H1 (cell line): ENCODE measurements at regions of chr7 and their contacts with region 1.

Region 1: DNA sequence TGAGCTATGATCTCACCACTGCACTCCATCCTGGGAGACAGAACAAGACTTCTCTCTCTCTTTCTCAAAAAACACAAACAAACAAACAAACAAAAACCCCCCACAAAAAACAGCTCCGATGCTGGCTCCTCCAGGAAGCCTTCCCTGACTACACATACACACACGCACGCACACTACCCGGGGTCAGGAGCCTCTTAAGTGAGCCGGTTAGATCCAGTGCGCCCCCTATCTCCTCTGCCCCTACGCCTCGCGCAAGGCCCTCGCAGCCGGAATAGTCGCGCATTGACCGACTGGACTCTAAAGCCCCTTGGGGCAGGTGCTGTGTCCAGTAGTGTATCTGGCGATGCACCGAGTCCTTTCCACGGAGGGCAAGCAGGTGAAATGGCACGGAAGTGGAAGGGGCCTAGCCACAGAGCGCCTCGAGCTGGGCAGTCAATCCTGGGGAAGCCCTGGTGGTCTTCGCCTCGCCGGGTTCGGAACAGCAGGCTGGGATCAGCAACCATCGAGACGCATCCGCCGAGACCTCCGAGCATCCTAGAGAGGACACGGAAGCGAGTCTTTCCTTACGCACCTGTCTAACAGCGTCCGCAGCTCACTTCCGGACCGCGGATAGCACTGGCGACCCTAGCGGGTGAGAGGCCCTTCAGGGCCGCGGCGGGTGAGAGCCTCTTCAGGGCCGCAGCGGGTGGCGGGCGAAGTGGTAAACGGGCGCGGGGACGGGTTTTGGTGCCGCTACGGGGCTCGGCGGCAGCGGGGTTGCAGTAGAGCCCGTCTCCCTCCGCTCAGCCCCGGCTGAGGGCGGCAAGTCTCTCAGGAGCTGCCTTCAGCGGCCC is at the start of gene ZSCAN25:
- DNase-seq: peak; percentile 88 to 94
- H3K4me3 ChIP-seq: peak within 1 kb of the TSS; percentile 88 to 96 (median 94)
- H3K27ac ChIP-seq: peak within 1 kb of the TSS; percentile 96
- H3K4me1 ChIP-seq: no peaks in the 10 kb centered on the region; a peak in 2 of 7 replicates
- H3K27me3 ChIP-seq: no peaks in the 10 kb centered on the region
- CTCF ChIP-seq: peak; percentile 45 to 70 (median 62)
- EP300 ChIP-seq: peak in 1 of 2 experiments; percentile 15; a peak in 1 of 3 replicates
- POLR2A ChIP-seq: peak; percentile 75 to 96
- RAD21 ChIP-seq: peak; percentile 37 to 65
- total RNA-seq, gene ZSCAN25: 16.5 and 18.6 TPM in 2 replicates

Region 2: DNA sequence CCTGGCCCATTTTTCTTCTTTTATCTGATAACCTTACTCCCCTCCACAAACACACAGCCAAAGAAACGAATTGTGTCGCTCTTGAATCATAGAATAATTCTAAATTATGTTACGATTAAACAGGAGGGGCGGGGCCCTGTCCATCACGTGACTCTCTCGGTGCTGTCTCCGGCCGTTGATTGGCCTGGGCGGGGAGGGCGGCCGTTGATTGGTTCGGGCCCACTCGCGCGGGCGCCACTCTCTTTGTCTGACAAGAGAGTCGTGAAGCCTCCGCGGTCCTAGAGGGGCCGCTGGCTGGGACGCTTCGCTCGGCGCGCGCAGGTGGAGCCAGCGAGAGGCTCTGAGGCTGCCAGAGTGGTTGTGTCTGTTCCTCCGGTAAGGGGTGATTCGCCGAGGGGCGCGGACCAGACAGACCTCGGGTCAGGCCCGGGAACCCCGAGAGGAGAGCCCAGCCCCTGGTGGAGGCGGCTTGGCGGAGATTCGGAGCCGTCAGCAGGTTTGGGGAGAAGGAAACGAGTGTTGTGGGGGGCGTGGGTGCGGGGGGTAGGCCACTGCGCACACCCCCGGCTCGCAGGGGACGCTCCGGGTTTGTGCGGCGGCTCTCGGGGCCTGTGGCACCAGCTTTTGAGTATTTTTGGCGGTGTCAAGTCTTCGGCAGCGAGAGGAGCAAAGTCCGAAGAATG is 143.9 kb before region 1 on chr7 and contains the start of gene ZNF789:
- CTCF ChIA-PET with region 1: no interaction called
- POLR2A ChIA-PET with region 1: interaction called, 10 read pairs
- DNase-seq: peak; percentile 84 to 97
- H3K4me3 ChIP-seq: peak within 1 kb of the TSS; percentile 75 to 91 (median 90)
- H3K27ac ChIP-seq: peak within 1 kb of the TSS; percentile 84
- H3K4me1 ChIP-seq: no peaks in the 10 kb centered on the region
- H3K27me3 ChIP-seq: no peaks in the 10 kb centered on the region
- CTCF ChIP-seq: no peak
- EP300 ChIP-seq: no peak
- POLR2A ChIP-seq: peak; percentile 4 to 81; a peak in 2 of 3 replicates
- RAD21 ChIP-seq: no peak
- total RNA-seq, gene ZNF789: 9.9 and 11.4 TPM in 2 replicates

Region 3: DNA sequence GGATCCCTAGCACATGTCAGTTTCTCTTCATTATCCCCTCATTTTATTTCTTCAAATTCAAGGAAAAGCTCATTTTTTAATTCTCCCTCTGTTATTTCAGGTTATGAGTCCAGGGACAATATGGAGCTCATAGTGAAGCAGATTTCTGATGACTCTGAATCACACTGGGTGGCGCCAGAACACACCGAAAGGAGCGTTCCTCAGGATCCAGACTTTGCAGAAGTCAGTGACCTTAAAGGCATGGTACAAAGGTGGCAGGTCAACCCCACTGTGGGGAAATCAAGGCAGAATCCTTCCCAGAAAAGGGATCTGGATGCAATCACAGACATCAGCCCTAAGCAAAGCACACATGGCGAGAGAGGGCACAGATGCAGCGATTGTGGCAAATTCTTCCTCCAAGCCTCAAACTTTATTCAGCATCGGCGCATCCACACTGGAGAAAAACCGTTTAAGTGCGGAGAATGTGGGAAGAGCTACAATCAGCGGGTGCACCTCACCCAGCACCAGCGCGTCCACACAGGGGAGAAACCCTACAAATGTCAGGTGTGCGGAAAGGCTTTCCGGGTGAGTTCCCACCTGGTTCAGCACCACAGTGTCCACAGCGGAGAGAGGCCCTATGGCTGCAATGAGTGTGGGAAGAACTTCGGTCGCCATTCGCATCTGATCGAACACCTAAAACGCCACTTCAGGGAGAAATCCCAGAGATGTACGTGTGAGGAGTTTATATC is 90.7 kb before region 1 on chr7:
- CTCF ChIA-PET with region 1: interaction called, 17 read pairs
- POLR2A ChIA-PET with region 1: interaction called, 5 read pairs
- DNase-seq: peak in 1 of 2 experiments; percentile 47
- H3K4me3 ChIP-seq: no peak overlapping the region
- H3K27ac ChIP-seq: no peak overlapping the region
- H3K4me1 ChIP-seq: no peaks in the 10 kb centered on the region
- H3K27me3 ChIP-seq: no peaks in the 10 kb centered on the region
- CTCF ChIP-seq: peak; percentile 37 to 49 (median 45)
- EP300 ChIP-seq: no peak
- POLR2A ChIP-seq: no peak
- RAD21 ChIP-seq: peak; percentile 71 to 78

Region 4: GRCh38 chr7:99579956-99580777 is 36.4 kb before region 1 on chr7:
- CTCF ChIA-PET with region 1: no interaction called
- POLR2A ChIA-PET with region 1: interaction called, 16 read pairs
- DNase-seq: peak in 1 of 2 experiments; percentile 89
- H3K4me3 ChIP-seq: peak overlapping the region; percentile 55 to 67 (median 60)
- H3K27ac ChIP-seq: peak overlapping the region; percentile 20; the same call in 1 of the 2 replicates
- H3K4me1 ChIP-seq: peaks cover 0 to 6% (median 2%) of the 10 kb centered on the region in 4 experiments; a peak in 3 of 7 replicates
- H3K27me3 ChIP-seq: no peaks in the 10 kb centered on the region
- CTCF ChIP-seq: peak; percentile 59 to 67 (median 64)
- EP300 ChIP-seq: peak in 1 of 2 experiments; percentile 62; a peak in 1 of 3 replicates
- POLR2A ChIP-seq: peak in 1 of 2 experiments; percentile 63; a peak in 1 of 3 replicates
- RAD21 ChIP-seq: peak; percentile 47 to 62; a peak in 3 of 4 replicates

Region 5: GRCh38 chr7:99597762-99598501 is 18.6 kb before region 1 on chr7 and contains the start of gene TMEM225B:
- CTCF ChIA-PET with region 1: interaction called, 28 read pairs
- POLR2A ChIA-PET with region 1: interaction called, 11 read pairs
- DNase-seq: peak in 1 of 2 experiments; percentile 55
- H3K4me3 ChIP-seq: no peak within 1 kb of the TSS
- H3K27ac ChIP-seq: no peak within 1 kb of the TSS
- H3K4me1 ChIP-seq: peaks cover 0 to 3% (median 2%) of the 10 kb centered on the region in 4 experiments; a peak in 3 of 7 replicates
- H3K27me3 ChIP-seq: no peaks in the 10 kb centered on the region
- CTCF ChIP-seq: no peak
- EP300 ChIP-seq: no peak
- POLR2A ChIP-seq: no peak
- RAD21 ChIP-seq: no peak
- total RNA-seq, gene TMEM225B: not detected in 2 replicates

Region 6: DNA sequence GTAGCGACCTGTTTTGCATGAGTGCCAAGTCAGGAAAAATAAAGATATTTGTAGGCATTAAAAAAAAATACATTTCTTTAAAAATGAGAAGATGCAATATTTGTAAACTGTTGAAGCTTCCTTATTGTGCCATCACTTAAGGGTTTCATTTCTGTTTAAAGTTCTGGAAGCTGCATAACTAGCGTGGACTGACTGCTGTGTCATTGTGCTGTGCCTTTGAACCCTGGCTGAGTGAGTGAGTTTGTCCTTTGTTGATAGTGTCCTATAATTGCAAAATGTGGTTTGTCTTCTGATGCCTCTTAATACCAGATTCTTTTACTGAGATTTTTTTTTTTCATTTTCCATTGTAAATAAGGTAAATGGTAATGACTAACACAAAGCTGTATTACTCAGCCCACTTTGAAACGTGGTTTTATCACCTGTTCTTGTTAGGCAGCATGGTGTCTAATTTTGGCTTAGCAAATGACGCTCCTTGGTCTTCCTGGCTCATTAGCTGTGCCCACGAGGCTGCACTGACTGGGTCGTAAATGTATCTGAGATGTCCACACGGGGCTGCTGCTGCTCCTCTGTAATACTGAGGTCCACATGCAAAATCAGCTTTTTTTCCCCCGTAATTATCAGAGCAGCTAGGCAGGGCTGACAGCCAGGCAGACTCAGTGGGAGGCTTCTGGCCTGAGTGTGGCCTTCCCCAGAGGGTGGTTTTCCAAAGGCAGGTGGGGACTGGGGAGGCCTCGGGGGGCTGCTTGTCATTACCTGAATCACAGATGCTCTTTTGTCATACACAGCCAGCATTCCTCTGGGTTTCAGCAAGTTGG is 14.9 kb after region 1 on chr7:
- CTCF ChIA-PET with region 1: interaction called, 13 read pairs
- POLR2A ChIA-PET with region 1: interaction called, 15 read pairs
- DNase-seq: peak in 1 of 2 experiments; percentile 41
- H3K4me3 ChIP-seq: no peak overlapping the region
- H3K27ac ChIP-seq: no peak overlapping the region
- H3K4me1 ChIP-seq: peaks cover 10 to 26% (median 18%) of the 10 kb centered on the region in 4 experiments
- H3K27me3 ChIP-seq: no peaks in the 10 kb centered on the region
- CTCF ChIP-seq: peak; percentile 49 to 65 (median 53)
- EP300 ChIP-seq: peak in 1 of 2 experiments; percentile 67; a peak in 1 of 3 replicates
- POLR2A ChIP-seq: no peak
- RAD21 ChIP-seq: peak; percentile 82 to 84

Region 7: GRCh38 chr7:99648843-99649242 is 32.3 kb after region 1 on chr7:
- CTCF ChIA-PET with region 1: no interaction called
- POLR2A ChIA-PET with region 1: no interaction called
- DNase-seq: no peak
- H3K4me3 ChIP-seq: no peak overlapping the region
- H3K27ac ChIP-seq: no peak overlapping the region
- H3K4me1 ChIP-seq: no peaks in the 10 kb centered on the region
- H3K27me3 ChIP-seq: no peaks in the 10 kb centered on the region
- CTCF ChIP-seq: no peak
- EP300 ChIP-seq: no peak
- POLR2A ChIP-seq: no peak
- RAD21 ChIP-seq: no peak